HepG2 (cell line): ENCODE measurements at regions of chr10 and their contacts with region 1.

Region 1: GRCh38 chr10:118568327-118568848 is 27.1 kb downstream of the PRLHR start:
- DNase-seq: peak; percentile 59
- ATAC-seq: peak; percentile 74
- H3K4me3 ChIP-seq: peak overlapping the region; percentile 26 to 56 (median 44); a peak in 3 of 6 replicates
- H3K27ac ChIP-seq: no peak overlapping the region
- H3K4me1 ChIP-seq: peaks cover 6% of the 10 kb centered on the region
- H3K27me3 ChIP-seq: peaks cover 0 to 27% of the 10 kb centered on the region in 2 experiments; a peak in 3 of 5 replicates
- CTCF ChIP-seq: peak; percentile 77
- EP300 ChIP-seq: no peak
- POLR2A ChIP-seq: no peak
- RAD21 ChIP-seq: peak; percentile 39; the same call in 1 of the 2 replicates

Region 2: GRCh38 chr10:118635674-118636402 is 67.5 kb after region 1 on chr10:
- CTCF ChIA-PET with region 1: no interaction called
- POLR2A ChIA-PET with region 1: no interaction called
- in situ Hi-C with region 1: no loop called
- intact Hi-C with region 1: no loop called
- DNase-seq: no peak
- ATAC-seq: no peak
- H3K4me3 ChIP-seq: no peak overlapping the region
- H3K27ac ChIP-seq: no peak overlapping the region
- H3K4me1 ChIP-seq: no peaks in the 10 kb centered on the region
- H3K27me3 ChIP-seq: peaks cover 0 to 18% of the 10 kb centered on the region in 2 experiments; a peak in 2 of 5 replicates
- CTCF ChIP-seq: no peak
- EP300 ChIP-seq: no peak
- POLR2A ChIP-seq: no peak
- RAD21 ChIP-seq: no peak

Region 3: DNA sequence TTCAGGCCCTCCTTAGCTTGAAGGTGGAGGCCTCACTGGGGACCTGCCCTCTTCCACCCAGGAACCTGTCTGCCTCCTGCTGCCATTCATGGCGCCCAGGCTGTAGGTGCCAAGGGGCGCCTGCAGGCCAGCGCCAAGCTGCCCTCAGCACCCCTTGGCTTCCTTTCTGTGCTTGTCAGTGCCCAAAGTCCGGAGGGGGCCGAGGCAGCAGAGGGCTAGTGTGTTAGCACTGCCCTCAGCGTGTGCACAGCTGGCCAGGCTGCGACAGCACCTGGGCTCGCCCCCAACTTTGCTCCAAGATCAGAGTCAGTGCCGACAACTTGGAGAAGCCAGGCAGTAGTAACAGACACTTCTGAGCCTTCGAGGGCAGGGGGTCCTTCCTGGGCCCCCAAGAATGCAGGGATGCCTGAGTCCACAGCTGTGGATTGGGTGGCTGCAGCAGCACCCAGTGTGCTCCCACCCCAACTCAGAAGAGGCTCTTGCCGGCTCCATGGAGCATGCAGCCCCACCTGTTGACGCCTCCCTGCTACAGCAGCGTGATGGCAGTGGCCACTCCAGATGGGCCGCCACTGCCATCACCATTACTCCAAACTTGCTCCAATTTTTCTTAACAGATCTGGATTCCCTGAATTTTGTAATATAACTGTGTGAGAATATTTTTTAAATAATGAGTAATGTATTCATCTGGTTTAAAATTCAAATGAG is 144.7 kb after region 1 on chr10:
- CTCF ChIA-PET with region 1: no interaction called
- POLR2A ChIA-PET with region 1: no interaction called
- in situ Hi-C with region 1: loop called (anchors 5 kb)
- intact Hi-C with region 1: loop called (anchors 2 kb)
- DNase-seq: no peak
- ATAC-seq: peak; percentile 68
- H3K4me3 ChIP-seq: no peak overlapping the region
- H3K27ac ChIP-seq: no peak overlapping the region
- H3K4me1 ChIP-seq: no peaks in the 10 kb centered on the region
- H3K27me3 ChIP-seq: no peaks in the 10 kb centered on the region
- CTCF ChIP-seq: peak; percentile 49
- EP300 ChIP-seq: no peak
- POLR2A ChIP-seq: no peak
- RAD21 ChIP-seq: no peak

Region 4: DNA sequence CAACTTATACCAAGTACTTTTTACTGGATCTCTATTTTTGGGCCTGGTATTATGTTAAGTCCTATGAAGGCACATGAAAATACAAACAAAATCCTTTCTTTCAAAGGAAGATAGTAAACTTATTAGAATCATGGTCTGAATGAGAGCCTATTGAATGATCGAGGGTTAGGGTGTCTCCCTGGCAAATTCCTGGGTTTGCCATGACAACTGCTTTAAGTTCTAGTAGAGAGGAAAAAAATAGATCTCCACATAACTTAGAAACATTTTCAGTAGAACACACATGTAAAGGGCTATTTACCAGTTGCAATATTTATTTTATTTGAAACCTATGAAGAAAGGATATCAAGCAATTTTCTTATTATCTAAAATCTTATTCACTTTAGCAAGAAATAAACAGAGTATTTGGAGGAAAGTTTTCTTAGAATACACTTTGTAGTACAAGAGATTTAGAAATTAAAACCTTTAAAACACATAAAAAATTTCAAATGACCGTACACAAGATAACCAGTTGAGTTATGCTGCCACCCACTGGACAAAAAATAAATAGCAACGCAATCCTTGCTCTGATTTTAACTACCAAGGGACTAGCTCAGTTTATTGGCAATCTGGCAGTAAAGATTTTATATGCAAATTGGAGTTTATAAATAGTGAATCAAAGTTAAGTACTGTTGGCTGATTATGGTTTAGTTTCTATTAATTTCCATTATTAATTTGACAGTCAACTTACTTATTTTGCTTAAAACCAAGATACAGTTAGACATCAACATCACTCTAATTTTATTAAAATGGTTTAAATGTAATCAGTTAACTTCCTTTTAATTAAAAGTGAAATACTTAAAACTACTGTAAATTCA is 152.5 kb after region 1 on chr10:
- CTCF ChIA-PET with region 1: interaction called, 19 read pairs
- POLR2A ChIA-PET with region 1: no interaction called
- in situ Hi-C with region 1: loop called (anchors 5 kb)
- intact Hi-C with region 1: loop called (anchors 1 kb)
- DNase-seq: peak; percentile 28
- ATAC-seq: no peak
- H3K4me3 ChIP-seq: no peak overlapping the region
- H3K27ac ChIP-seq: no peak overlapping the region
- H3K4me1 ChIP-seq: no peaks in the 10 kb centered on the region
- H3K27me3 ChIP-seq: no peaks in the 10 kb centered on the region
- CTCF ChIP-seq: peak; percentile 70
- EP300 ChIP-seq: no peak
- POLR2A ChIP-seq: no peak
- RAD21 ChIP-seq: no peak

Region 5: DNA sequence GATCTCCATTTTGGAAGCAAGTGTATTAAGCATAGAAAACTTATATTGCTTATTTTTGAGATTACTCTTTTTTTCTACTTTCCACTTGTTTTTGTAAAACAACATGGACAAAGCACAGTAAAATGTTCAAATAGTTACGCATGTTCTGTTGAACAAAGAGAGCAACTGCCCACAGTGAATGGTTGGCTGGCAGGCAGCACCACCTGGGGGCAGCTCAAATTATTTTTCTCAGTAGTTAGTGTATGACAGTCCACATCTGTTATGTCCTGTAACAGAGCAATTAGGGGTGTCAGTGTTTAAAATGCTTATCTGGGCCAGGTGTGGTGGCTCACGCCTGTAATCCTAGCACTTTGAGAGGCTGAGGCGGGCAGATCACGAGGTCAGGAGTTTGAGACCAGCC is 232.5 kb after region 1 on chr10:
- CTCF ChIA-PET with region 1: interaction called, 7 read pairs
- POLR2A ChIA-PET with region 1: no interaction called
- in situ Hi-C with region 1: loop called (anchors 10 kb)
- intact Hi-C with region 1: loop called (anchors 1 kb)
- DNase-seq: peak; percentile 10
- ATAC-seq: peak; percentile 87
- H3K4me3 ChIP-seq: no peak overlapping the region
- H3K27ac ChIP-seq: no peak overlapping the region
- H3K4me1 ChIP-seq: no peaks in the 10 kb centered on the region
- H3K27me3 ChIP-seq: 0 out of 5 replicates have a peak, but pooled peaks cover 0 to 6% of the 10 kb centered on the region in 2 experiments
- CTCF ChIP-seq: peak; percentile 66
- EP300 ChIP-seq: no peak
- POLR2A ChIP-seq: no peak
- RAD21 ChIP-seq: peak; percentile 45; the same call in 1 of the 2 replicates

Region 6: GRCh38 chr10:118850418-118851061 is 282.2 kb after region 1 on chr10:
- CTCF ChIA-PET with region 1: interaction called, 3 read pairs
- POLR2A ChIA-PET with region 1: no interaction called
- in situ Hi-C with region 1: no loop called
- intact Hi-C with region 1: loop called (anchors 5 kb)
- DNase-seq: peak; percentile 38
- ATAC-seq: peak; percentile 57; the same call in 2 of the 3 replicates
- H3K4me3 ChIP-seq: no peak overlapping the region
- H3K27ac ChIP-seq: no peak overlapping the region
- H3K4me1 ChIP-seq: no peaks in the 10 kb centered on the region
- H3K27me3 ChIP-seq: no peaks in the 10 kb centered on the region; a peak in 1 of 5 replicates
- CTCF ChIP-seq: peak; percentile 64
- EP300 ChIP-seq: no peak
- POLR2A ChIP-seq: no peak
- RAD21 ChIP-seq: 0 out of 2 replicates have a peak, but pooled peaks have one; percentile 29

Region 7: DNA sequence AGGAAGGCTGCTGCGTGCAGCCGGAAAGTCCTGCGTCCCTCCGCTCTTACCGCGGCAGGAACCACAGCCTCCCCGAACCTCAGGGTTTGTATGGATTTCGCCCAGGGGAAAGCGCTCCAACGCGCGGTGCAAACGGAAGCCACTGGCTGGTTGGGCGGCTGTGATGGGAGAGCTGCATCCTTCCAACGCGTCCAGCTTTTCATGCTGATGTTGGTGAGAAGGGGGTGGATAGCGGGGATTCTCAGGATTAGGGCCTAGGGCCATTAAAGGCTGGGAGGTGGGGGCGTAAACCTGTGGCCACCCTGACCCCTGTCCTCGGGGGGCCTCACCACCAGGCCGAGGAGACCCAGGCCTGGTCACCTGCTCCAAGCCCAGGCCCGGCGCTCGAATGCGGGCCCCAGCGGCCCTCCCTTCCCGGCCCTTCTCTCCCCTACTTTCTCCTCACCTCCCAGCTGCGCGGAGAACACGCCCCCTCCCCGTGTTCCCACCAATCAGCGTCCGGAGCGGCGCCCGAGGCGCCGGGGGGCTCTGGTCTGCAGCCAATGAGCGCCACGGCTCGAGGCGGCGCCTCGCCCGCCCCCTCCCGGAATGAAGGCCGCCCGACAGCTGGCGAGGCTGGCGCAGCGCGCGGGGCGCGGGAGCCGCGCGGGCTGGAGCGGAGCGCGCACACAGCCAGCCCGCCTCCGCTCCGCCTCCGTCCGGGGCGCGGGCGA is 460.7 kb after region 1 on chr10:
- CTCF ChIA-PET with region 1: no interaction called
- POLR2A ChIA-PET with region 1: no interaction called
- in situ Hi-C with region 1: no loop called
- intact Hi-C with region 1: loop called (anchors 5 kb)
- DNase-seq: peak; percentile 84
- ATAC-seq: peak; percentile 82
- H3K4me3 ChIP-seq: peak overlapping the region; percentile 49 to 77 (median 64)
- H3K27ac ChIP-seq: no peak overlapping the region
- H3K4me1 ChIP-seq: peaks cover 60% of the 10 kb centered on the region
- H3K27me3 ChIP-seq: peaks cover 3 to 27% of the 10 kb centered on the region in 2 experiments; a peak in 2 of 5 replicates
- CTCF ChIP-seq: no peak
- EP300 ChIP-seq: no peak
- POLR2A ChIP-seq: no peak; a peak in 1 of 4 replicates
- RAD21 ChIP-seq: no peak; the same call in 1 of the 2 replicates